ENCODE measurements at regions of chr4 and their contacts with region 1.

Region 1: GRCh38 chr4:154332681-154333421 is 158.7 kb downstream of the DCHS2 start:
- DNase-seq: peak; percentile 80
- H3K4me3 Mint-ChIP-seq: peak overlapping the region; percentile 61
- H3K27ac Mint-ChIP-seq: no peak overlapping the region
- H3K4me1 Mint-ChIP-seq: peaks cover 11% of the 10 kb centered on the region
- H3K27me3 Mint-ChIP-seq: peaks cover 26% of the 10 kb centered on the region

Region 2: DNA sequence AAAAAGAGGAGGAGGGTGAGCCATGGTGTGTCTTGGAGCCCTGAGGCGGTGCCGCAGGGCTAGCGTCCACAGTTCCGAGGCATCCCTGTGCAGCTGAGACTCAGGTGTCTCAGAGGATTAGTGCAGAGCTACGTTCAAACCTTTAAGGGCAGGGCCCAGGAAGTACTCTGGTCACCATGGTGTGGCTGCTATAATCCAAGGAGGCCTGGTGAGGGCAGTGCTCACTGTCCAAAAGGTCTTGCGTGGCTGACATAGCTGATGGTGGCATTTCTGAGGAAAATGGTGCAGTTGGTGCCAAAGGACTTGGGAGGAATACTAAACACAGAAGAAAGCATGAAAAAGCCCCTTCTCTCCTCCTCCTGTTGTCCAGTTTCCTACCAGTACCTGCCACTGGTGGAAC is 11.8 kb after region 1 on chr4:
- CTCF ChIA-PET with region 1: no interaction called
- POLR2A ChIA-PET with region 1: no interaction called
- intact Hi-C with region 1: no loop called
- DNase-seq: no peak
- H3K4me3 Mint-ChIP-seq: no peak overlapping the region
- H3K27ac Mint-ChIP-seq: no peak overlapping the region
- H3K4me1 Mint-ChIP-seq: no peaks in the 10 kb centered on the region
- H3K27me3 Mint-ChIP-seq: peaks cover 5% of the 10 kb centered on the region

Region 3: DNA sequence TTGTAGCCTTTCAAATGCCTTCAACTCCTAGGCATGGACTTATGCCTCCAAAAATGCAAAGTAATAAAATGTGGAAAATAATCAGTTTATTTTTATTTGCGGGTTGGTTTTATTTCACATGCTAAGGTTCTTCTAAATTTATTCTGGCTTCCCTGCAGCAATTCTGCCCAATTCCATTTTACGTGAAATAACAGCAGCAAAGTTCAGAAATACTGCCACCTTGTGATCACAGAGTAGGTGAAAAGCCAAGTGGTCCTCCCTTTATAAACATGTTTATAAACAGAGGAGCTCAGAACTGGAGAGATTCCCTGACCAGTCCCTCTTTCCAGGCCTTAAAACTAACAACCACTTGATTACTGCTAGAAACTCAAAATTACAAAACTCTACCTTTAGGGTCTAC is 173.4 kb after region 1 on chr4:
- CTCF ChIA-PET with region 1: interaction called, 6 read pairs
- POLR2A ChIA-PET with region 1: no interaction called
- intact Hi-C with region 1: loop called (anchors 1 kb)
- DNase-seq: no peak
- H3K4me3 Mint-ChIP-seq: no peak overlapping the region
- H3K27ac Mint-ChIP-seq: no peak overlapping the region
- H3K4me1 Mint-ChIP-seq: no peaks in the 10 kb centered on the region
- H3K27me3 Mint-ChIP-seq: peaks cover 17% of the 10 kb centered on the region

Region 4: GRCh38 chr4:154618708-154619315 is 286.0 kb after region 1 on chr4:
- CTCF ChIA-PET with region 1: no interaction called
- POLR2A ChIA-PET with region 1: no interaction called
- intact Hi-C with region 1: loop called (anchors 5 kb)
- DNase-seq: peak; percentile 68
- H3K4me3 Mint-ChIP-seq: no peak overlapping the region
- H3K27ac Mint-ChIP-seq: no peak overlapping the region
- H3K4me1 Mint-ChIP-seq: peaks cover 8% of the 10 kb centered on the region
- H3K27me3 Mint-ChIP-seq: no peaks in the 10 kb centered on the region